Ascending aorta (tissue), 2 donors: ENCODE measurements at regions of chr20 and their contacts with region 1.

Region 1: GRCh38 chr20:10427060-10427692 is 6.8 kb downstream of the MKKS start:
- DNase-seq: peak in 1 of 2 donors; percentile 71
- H3K4me3 ChIP-seq: no peak overlapping the region
- H3K27ac ChIP-seq: no peak overlapping the region
- H3K4me1 ChIP-seq: peaks cover 3 to 8% of the 10 kb centered on the region in 2 donors
- H3K27me3 ChIP-seq: no peaks in the 10 kb centered on the region
- CTCF ChIP-seq: peak; percentile 58 to 81 (median 76)

Region 2: DNA sequence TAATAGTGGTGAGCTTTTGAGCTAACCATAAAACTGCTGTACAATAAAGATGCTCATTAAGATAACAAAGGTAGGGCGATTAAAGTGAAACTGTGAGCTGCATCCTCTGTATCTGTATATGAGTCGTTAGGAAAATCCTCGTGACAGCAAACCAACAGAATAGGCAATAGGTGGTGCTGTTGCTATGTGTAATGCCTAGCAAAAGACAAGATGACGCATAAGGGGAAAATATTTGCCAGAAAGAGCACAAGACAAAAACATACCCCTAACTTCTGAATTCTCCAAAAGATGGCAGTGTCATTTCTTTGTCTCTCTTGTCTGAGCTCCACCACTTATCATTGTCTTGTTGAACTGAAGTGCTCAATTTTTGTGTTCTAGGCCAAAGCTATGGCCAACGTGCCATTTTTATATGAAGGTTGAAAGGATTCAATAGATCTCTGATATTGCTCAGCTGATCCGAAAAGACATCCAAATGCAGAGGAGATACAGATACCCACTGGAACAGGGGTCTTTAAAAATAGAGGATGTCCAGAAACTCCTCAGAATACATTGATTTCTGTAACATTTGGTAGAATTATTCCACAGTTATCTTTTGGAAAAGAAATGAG is 448.7 kb before region 1 on chr20:
- intact Hi-C with region 1: loop called (anchors 1 kb)
- DNase-seq: peak in 1 of 2 donors; percentile 71
- H3K4me3 ChIP-seq: peak overlapping the region in 1 of 2 donors; percentile 48
- H3K27ac ChIP-seq: peak overlapping the region; percentile 10 to 17
- H3K4me1 ChIP-seq: no peaks in the 10 kb centered on the region
- H3K27me3 ChIP-seq: no peaks in the 10 kb centered on the region
- CTCF ChIP-seq: peak; percentile 72 to 80 (median 79)

Region 3: GRCh38 chr20:10171864-10172751 is 255.1 kb before region 1 on chr20:
- intact Hi-C with region 1: loop called (anchors 5 kb)
- DNase-seq: peak; percentile 15 to 79
- H3K4me3 ChIP-seq: peak overlapping the region; percentile 63 to 70
- H3K27ac ChIP-seq: peak overlapping the region; percentile 37 to 38
- H3K4me1 ChIP-seq: peaks cover 0 to 4% of the 10 kb centered on the region in 2 donors
- H3K27me3 ChIP-seq: no peaks in the 10 kb centered on the region
- CTCF ChIP-seq: peak in 1 of 3 experiments; percentile 31

Region 4: DNA sequence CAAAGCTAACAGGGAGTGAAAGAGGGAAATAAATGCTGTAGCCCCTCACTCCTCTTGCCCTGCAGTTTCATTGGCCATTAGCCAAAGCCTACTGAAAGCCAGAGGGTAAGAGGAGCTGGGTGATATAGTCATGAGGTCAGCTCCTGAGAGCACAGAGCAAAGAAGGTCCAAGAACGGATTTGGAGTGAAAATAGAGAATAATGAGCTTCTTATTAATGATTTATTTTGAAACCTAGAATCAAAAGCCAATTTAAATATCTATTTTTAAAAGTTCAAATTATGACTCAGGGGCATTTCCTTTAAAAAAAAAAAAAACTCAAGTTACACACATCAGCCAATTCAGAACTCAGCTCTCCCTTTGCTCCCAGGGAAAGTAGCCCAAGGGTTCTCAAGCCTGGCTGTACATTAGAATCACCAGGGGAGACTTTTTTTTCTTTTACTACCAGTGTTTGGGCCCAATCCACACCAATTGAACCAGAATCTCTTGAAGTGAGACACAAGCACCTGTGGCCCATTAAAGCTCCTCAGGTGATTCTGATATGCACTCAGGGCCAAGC is 129.4 kb before region 1 on chr20:
- intact Hi-C with region 1: loop called (anchors 5 kb)
- DNase-seq: no peak
- H3K4me3 ChIP-seq: no peak overlapping the region
- H3K27ac ChIP-seq: peak overlapping the region; percentile 77 to 81
- H3K4me1 ChIP-seq: peaks cover 8 to 29% of the 10 kb centered on the region in 2 donors
- H3K27me3 ChIP-seq: no peaks in the 10 kb centered on the region
- CTCF ChIP-seq: no peak

Region 5: GRCh38 chr20:11182720-11183119 is 755.5 kb after region 1 on chr20:
- intact Hi-C with region 1: no loop called
- DNase-seq: no peak
- H3K4me3 ChIP-seq: no peak overlapping the region
- H3K27ac ChIP-seq: no peak overlapping the region
- H3K4me1 ChIP-seq: peaks cover 0 to 4% of the 10 kb centered on the region in 2 donors
- H3K27me3 ChIP-seq: no peaks in the 10 kb centered on the region
- CTCF ChIP-seq: no peak